ENCODE measurements at regions of chr5 and their contacts with region 1.

Region 1: DNA sequence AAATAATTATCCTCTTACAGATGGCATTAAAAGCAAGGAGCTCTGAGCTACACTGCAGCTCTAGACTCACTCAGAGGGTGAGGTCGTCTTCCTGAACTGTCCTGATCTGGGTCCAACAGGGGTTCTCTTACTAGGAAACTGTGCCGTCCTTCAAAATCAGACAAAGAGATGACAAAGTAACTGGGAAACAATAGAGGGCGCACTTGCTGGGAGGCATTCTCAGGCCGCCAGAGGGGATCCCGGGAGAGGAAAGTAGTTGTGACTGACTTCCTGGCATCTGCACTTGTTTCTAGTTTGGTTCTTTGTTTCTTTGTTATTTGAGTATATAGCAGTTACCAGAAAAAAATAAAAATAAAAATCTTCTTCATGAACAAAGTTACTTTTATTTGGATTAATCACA is 142.9 kb upstream of the MSX2 start:
- DNase-seq: peak in 2 of 10 donors; percentile 23 to 35

Region 2: GRCh38 chr5:174464504-174465165 is 116.8 kb before region 1 on chr5:
- intact Hi-C with region 1: no loop called
- DNase-seq: no peak

Region 3: GRCh38 chr5:174542471-174542870 is 39.0 kb before region 1 on chr5:
- intact Hi-C with region 1: loop called (anchors 5 kb)
- DNase-seq: no peak